HEK293 (cell line): ENCODE measurements at regions of chr2 and their contacts with region 1.

Region 1: DNA sequence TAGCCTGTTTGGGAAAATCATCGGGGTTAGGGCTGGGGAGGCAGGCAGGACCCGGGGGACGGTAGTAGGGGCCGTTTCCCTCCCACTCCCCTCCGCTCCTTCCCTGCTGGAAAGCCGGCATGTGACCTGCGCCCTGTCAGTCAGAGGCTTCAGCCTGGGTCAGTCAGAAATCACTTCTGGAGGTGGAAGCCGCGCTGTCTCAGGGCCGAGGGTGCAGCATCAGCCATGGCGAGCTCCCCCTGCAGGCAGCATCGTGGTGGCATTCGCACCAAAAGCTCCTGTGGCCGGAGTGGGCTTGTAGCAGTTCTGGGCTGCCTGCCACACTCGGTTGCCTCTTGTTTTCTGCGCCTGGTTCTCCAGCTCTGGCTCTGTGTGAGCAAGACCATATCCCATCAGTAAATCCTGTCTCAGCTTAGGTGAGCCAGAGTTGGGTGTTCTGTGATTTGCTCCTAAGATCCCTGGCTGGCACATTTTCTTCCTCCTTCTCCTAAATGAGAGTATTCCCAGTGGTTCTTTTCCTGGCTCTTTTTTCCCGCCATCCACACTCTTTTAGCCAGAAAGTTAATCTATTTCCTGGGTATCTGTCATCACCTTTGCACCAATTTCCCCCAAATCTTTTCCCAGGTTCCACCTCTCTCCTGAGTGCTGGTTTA is 123.9 kb upstream of the CD302 start:
- H3K4me3 ChIP-seq: no peak overlapping the region
- H3K27ac ChIP-seq: no peak overlapping the region
- H3K4me1 ChIP-seq: peaks cover 3% of the 10 kb centered on the region; the same call in 1 of the 2 replicates
- CTCF ChIP-seq: peak; percentile 89

Region 2: GRCh38 chr2:159902722-159903121 is 19.2 kb before region 1 on chr2:
- CTCF ChIA-PET with region 1: interaction called, 23 read pairs
- POLR2A ChIA-PET with region 1: no interaction called
- H3K4me3 ChIP-seq: no peak overlapping the region
- H3K27ac ChIP-seq: no peak overlapping the region
- H3K4me1 ChIP-seq: peaks cover 6% of the 10 kb centered on the region
- CTCF ChIP-seq: no peak

Region 3: DNA sequence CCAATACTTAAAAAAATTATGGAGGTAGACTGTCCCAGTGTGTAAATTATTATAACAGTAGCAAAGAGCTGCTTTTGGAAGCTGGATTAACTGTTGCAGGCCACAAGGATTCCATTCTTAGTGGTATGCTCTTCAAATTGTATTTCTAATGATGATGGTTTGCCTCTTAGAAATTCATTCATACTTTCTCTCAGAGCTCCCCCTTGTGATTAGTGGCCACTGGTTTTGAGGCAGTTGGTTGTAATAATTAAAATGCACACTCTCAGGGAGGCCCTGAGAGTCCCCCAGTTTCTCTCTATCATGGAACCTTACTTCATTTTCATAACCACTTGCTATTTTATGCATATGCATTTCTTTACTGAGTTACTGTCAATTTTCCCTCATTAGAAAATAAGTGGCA is 18.1 kb after region 1 on chr2:
- CTCF ChIA-PET with region 1: interaction called, 13 read pairs
- POLR2A ChIA-PET with region 1: no interaction called
- H3K4me3 ChIP-seq: no peak overlapping the region
- H3K27ac ChIP-seq: no peak overlapping the region
- H3K4me1 ChIP-seq: no peaks in the 10 kb centered on the region
- CTCF ChIP-seq: peak; percentile 22; the same call in 1 of the 2 replicates